Endothelial cell of umbilical vein (primary cell): ENCODE measurements at regions of chr15 and their contacts with region 1.

Region 1: DNA sequence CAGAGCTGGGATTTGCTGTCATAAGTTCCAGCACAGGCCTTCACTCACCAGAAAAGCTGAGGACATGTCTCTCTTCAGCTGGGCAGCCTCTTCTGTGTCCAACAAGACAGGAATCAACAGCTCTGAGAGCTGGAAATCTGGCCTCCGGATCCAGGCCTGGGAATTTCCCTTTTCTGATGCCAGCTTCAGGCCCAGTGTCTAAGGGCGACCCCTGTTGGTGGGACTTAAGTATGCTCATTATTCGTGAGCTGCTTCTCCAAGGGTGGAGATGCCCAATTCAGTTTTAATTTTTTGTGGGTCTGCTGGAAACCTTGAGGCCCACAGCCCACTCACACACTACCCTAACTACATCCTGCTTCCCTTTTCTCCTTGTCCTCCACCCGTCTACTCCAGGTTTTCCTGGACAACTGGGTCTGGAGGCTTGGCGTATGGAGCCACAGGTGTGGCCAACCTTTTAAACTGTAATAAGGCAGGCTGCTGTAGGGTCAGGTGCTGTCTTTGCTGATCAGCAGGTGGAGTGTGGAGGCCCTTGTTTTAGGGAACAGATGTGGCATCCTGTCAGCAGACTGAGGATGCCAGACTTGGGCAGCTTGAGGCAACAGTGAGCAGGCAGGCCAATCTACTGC is 2.6 kb upstream of the CEMIP start:
- DNase-seq: peak; percentile 81
- H3K4me3 ChIP-seq: no peak overlapping the region
- H3K27ac ChIP-seq: no peak overlapping the region
- H3K4me1 ChIP-seq: peaks cover 18% of the 10 kb centered on the region
- H3K27me3 ChIP-seq: peaks cover 13 to 17% of the 10 kb centered on the region in 2 experiments
- CTCF ChIP-seq: peak; percentile 88
- POLR2A ChIP-seq: no peak

Region 2: DNA sequence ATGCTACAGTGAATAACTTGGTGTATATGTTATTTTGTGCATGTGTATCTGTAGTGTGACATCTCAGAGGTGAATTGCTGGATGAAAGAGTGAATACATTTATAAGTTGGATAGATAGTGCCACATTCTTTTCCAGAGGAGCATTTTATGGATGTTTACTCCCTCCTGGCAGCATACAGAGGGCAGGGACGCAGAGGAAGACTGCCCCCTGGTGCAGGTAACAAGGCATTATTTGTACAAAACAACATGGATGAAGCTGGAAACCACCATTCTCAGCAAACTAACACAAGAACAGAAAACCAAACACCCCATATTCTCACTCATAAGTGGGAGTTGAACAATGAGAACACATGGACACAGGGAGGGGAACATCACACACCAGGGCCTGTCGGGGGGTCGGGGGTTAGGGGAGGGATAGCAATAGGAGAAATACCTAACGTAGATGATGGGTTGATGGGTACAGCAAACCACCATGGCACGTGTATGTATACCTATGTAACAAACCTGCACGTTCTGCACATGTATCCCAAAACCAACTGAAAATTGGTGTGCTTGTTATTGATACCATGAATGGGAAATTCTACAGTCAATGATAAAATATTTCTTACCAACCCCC is 466.7 kb before region 1 on chr15:
- CTCF ChIA-PET with region 1: no interaction called
- POLR2A ChIA-PET with region 1: no interaction called
- dilution Hi-C with region 1: no loop called
- intact Hi-C with region 1: no loop called
- DNase-seq: peak; percentile 11
- H3K4me3 ChIP-seq: no peak overlapping the region
- H3K27ac ChIP-seq: no peak overlapping the region
- H3K4me1 ChIP-seq: no peaks in the 10 kb centered on the region
- H3K27me3 ChIP-seq: no peaks in the 10 kb centered on the region
- CTCF ChIP-seq: peak; percentile 24 to 33
- POLR2A ChIP-seq: no peak

Region 3: GRCh38 chr15:80455668-80456442 is 320.7 kb before region 1 on chr15:
- CTCF ChIA-PET with region 1: interaction called, 139 read pairs
- POLR2A ChIA-PET with region 1: no interaction called
- dilution Hi-C with region 1: no loop called
- intact Hi-C with region 1: loop called (anchors 1 kb)
- DNase-seq: peak; percentile 63
- H3K4me3 ChIP-seq: no peak overlapping the region
- H3K27ac ChIP-seq: no peak overlapping the region
- H3K4me1 ChIP-seq: no peaks in the 10 kb centered on the region
- H3K27me3 ChIP-seq: peaks cover 1 to 3% of the 10 kb centered on the region in 2 experiments
- CTCF ChIP-seq: peak; percentile 85 to 94
- POLR2A ChIP-seq: no peak

Region 4: GRCh38 chr15:80574590-80574989 is 201.9 kb before region 1 on chr15:
- CTCF ChIA-PET with region 1: interaction called, 828 read pairs
- POLR2A ChIA-PET with region 1: no interaction called
- dilution Hi-C with region 1: no loop called
- intact Hi-C with region 1: no loop called
- DNase-seq: no peak
- H3K4me3 ChIP-seq: no peak overlapping the region
- H3K27ac ChIP-seq: no peak overlapping the region
- H3K4me1 ChIP-seq: no peaks in the 10 kb centered on the region
- H3K27me3 ChIP-seq: peaks cover 6 to 8% of the 10 kb centered on the region in 2 experiments
- CTCF ChIP-seq: no peak
- POLR2A ChIP-seq: no peak

Region 5: DNA sequence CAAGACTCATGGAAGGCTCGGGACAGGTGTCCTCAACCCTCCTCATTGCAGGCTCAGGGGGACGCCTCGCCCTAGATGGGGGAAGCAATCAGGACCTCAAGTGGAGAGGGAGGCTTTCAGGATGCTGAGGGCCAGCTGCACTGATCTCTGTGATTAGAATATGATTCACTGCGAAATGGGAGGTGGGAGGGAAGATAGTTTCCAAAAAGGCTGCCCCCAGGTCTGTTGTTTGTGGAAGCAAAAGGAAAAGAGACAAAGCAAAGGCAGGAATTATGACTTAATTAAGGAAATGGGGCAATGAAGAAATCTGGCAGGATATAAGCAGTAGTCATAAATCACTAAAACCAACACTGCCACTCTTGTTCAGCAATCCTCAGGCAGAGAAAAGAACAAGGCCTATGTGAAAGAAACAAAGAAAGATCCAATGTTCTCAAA is 167.0 kb before region 1 on chr15:
- CTCF ChIA-PET with region 1: interaction called, 11 read pairs
- POLR2A ChIA-PET with region 1: no interaction called
- dilution Hi-C with region 1: no loop called
- intact Hi-C with region 1: no loop called
- DNase-seq: peak; percentile 87
- H3K4me3 ChIP-seq: no peak overlapping the region
- H3K27ac ChIP-seq: no peak overlapping the region
- H3K4me1 ChIP-seq: peaks cover 21% of the 10 kb centered on the region
- H3K27me3 ChIP-seq: no peaks in the 10 kb centered on the region
- CTCF ChIP-seq: no peak
- POLR2A ChIP-seq: no peak

Region 6: DNA sequence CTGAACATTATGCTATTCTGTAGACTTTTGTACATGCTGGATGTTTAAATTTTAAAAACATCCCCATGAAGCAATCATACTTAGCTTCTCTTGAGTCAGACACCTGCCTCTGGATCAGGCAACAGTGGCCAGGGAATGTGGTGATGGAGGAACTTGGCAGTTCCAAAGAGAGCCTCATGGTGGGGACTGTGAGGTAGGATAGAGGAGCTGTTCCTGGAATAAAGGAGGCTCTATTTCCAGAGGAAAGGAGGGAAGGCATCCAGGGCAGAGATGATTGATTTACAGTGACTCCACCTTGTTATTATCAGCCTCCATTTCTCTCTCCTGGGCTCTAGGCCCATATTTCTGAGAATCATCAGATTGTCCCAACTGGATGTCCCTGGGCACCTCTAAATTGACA is 116.4 kb before region 1 on chr15:
- CTCF ChIA-PET with region 1: interaction called, 40 read pairs
- POLR2A ChIA-PET with region 1: no interaction called
- dilution Hi-C with region 1: no loop called
- intact Hi-C with region 1: loop called (anchors 1 kb)
- DNase-seq: peak; percentile 24
- H3K4me3 ChIP-seq: no peak overlapping the region
- H3K27ac ChIP-seq: no peak overlapping the region
- H3K4me1 ChIP-seq: no peaks in the 10 kb centered on the region
- H3K27me3 ChIP-seq: peaks cover 0 to under 1% of the 10 kb centered on the region in 2 experiments
- CTCF ChIP-seq: peak; percentile 17 to 30
- POLR2A ChIP-seq: no peak

Region 7: DNA sequence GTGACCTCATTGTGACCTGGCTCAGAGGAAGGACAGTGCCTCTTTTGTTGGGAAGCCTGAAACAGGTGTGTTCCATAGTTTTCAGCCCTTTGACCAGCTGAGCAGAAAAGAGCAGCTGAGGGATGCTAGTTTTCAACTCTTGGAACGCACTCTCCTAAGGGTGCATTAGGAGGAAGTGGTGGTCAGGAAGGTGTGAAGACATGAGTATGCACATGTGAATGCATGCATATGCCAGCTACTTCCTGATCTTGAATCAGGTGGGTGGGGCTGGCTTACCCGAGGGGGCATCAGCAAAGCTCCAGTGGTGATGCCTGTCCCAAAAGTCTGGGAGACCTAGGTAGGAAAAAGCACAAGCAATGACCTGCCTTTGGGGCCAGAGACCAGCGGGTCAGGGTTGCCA is 20.6 kb before region 1 on chr15:
- CTCF ChIA-PET with region 1: interaction called, 11 read pairs
- POLR2A ChIA-PET with region 1: no interaction called
- dilution Hi-C with region 1: no loop called
- intact Hi-C with region 1: no loop called
- DNase-seq: no peak
- H3K4me3 ChIP-seq: no peak overlapping the region
- H3K27ac ChIP-seq: no peak overlapping the region
- H3K4me1 ChIP-seq: peaks cover 7% of the 10 kb centered on the region
- H3K27me3 ChIP-seq: no peaks in the 10 kb centered on the region
- CTCF ChIP-seq: no peak
- POLR2A ChIP-seq: no peak

Region 8: GRCh38 chr15:80929225-80929624 is 152.7 kb after region 1 on chr15:
- CTCF ChIA-PET with region 1: no interaction called
- POLR2A ChIA-PET with region 1: no interaction called
- dilution Hi-C with region 1: no loop called
- intact Hi-C with region 1: no loop called
- DNase-seq: no peak
- H3K4me3 ChIP-seq: no peak overlapping the region
- H3K27ac ChIP-seq: no peak overlapping the region
- H3K4me1 ChIP-seq: peaks cover 5% of the 10 kb centered on the region
- H3K27me3 ChIP-seq: no peaks in the 10 kb centered on the region
- CTCF ChIP-seq: no peak
- POLR2A ChIP-seq: no peak

Region 9: GRCh38 chr15:80970018-80970658 is 193.6 kb after region 1 on chr15:
- CTCF ChIA-PET with region 1: interaction called, 74 read pairs
- POLR2A ChIA-PET with region 1: no interaction called
- dilution Hi-C with region 1: no loop called
- intact Hi-C with region 1: loop called (anchors 1 kb)
- DNase-seq: peak; percentile 64
- H3K4me3 ChIP-seq: no peak overlapping the region
- H3K27ac ChIP-seq: no peak overlapping the region
- H3K4me1 ChIP-seq: no peaks in the 10 kb centered on the region
- H3K27me3 ChIP-seq: no peaks in the 10 kb centered on the region
- CTCF ChIP-seq: peak; percentile 59 to 61
- POLR2A ChIP-seq: no peak